MCF 10A (cell line): ENCODE measurements at regions of chr21 and their contacts with region 1.

Region 1: DNA sequence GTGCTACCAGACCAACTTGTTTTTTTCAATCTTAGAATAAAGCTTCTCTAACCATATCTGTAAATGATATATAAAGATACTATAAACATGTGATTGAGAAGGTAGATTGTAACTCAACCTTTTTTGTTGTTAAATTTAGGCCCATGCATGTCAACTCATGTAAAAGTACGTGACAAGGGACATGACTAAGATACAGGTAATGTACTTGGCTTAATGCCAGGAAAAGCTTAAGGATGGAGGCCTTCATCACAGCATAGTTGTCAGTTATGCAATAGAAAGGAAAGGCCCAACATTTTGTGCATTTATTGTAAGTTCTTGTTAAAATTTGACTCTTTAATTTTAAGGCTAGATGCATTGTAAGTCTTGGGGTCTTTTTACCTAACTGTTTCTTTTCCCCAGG is 305.1 kb downstream of the LTN1 start:
- DNase-seq: peak; percentile 57
- H3K4me3 Mint-ChIP-seq: no peak overlapping the region
- H3K27ac Mint-ChIP-seq: no peak overlapping the region
- H3K4me1 Mint-ChIP-seq: peaks cover under 1% of the 10 kb centered on the region
- H3K27me3 Mint-ChIP-seq: no peaks in the 10 kb centered on the region
- CTCF ChIP-seq: no peak

Region 2: DNA sequence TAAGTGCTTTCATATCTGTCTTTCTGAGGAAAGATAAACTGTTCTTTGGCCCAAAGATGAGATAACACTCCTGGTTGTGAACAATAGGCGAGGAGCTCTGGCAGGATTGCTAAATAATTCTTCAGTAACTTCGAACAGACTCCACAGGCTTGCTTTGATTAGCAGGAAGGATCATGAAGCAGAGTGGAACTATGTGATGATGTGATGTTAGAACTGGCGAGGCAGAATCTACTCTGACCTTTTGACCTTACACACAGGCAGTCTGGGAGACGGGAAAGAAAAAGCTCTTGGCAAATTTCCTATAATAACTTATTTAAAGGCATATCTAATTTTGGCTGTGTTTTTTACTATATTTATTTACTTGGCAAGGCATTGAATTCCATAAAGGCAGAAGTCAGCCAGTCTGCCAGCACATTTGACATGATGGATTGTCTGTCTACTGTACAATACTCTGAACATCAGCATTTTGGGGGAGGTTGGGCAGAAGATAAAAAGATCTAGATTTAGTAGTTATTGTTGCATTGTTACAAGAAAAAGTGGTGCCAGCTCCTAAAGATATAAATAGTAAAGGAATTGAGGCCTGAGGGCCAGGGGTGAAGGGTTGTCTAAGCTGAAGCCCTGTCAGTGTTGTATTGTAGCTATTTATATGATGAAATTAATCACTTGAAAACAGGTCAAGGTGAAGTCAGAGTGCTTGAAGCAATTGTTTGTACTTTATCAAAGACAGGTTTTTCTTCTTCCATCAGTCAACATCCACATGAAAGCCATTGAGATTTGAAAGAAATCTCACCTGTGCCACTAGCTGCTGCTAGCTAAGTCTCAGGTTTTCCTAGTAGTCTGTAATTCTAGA is 403.7 kb before region 1 on chr21:
- CTCF ChIA-PET with region 1: no interaction called
- POLR2A ChIA-PET with region 1: no interaction called
- intact Hi-C with region 1: no loop called
- DNase-seq: peak; percentile 30
- H3K4me3 Mint-ChIP-seq: no peak overlapping the region
- H3K27ac Mint-ChIP-seq: peak overlapping the region; percentile 46
- H3K4me1 Mint-ChIP-seq: peaks cover 7% of the 10 kb centered on the region
- H3K27me3 Mint-ChIP-seq: no peaks in the 10 kb centered on the region
- CTCF ChIP-seq: no peak

Region 3: GRCh38 chr21:28633839-28634555 is 53.6 kb before region 1 on chr21:
- CTCF ChIA-PET with region 1: no interaction called
- POLR2A ChIA-PET with region 1: interaction called, 17 read pairs
- intact Hi-C with region 1: loop called (anchors 10 kb)
- DNase-seq: peak; percentile 68
- H3K4me3 Mint-ChIP-seq: no peak overlapping the region
- H3K27ac Mint-ChIP-seq: peak overlapping the region; percentile 84
- H3K4me1 Mint-ChIP-seq: peaks cover 44% of the 10 kb centered on the region
- H3K27me3 Mint-ChIP-seq: no peaks in the 10 kb centered on the region
- CTCF ChIP-seq: no peak

Region 4: DNA sequence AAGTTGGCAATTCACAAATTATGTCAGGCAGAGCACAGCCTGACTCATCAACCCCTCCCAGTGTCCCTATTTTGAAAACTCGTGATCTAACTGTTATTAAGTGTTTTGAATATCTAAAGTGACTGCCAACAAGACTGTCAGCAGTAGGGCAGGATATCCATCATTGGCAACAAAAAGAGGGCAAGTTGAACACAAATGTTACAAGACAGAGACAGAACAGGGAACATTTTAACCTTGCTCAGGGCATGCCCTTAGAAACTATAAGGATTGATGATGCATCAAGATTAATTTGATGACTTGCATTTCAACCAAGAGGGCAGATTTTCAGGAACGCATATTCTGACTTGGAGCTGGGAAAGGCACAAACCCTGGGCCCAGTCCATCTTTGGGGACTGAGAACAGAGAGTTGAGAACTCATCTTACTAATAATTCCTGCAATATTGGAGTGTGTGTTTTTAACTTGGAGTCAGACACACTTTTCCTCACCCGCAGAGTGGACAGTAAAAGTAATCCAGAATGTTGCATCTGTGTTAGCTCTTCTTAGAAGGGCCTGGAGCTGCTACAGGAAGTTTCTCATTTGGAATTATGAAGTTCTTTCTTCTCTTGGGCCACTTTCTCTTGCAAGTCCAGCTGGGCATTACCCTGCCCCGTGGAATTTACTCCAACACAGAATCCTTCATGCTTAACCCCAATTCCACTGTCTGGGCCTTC is 12.1 kb before region 1 on chr21:
- CTCF ChIA-PET with region 1: interaction called, 4 read pairs
- POLR2A ChIA-PET with region 1: interaction called, 27 read pairs
- intact Hi-C with region 1: no loop called
- DNase-seq: peak; percentile 21
- H3K4me3 Mint-ChIP-seq: no peak overlapping the region
- H3K27ac Mint-ChIP-seq: peak overlapping the region; percentile 86
- H3K4me1 Mint-ChIP-seq: peaks cover 10% of the 10 kb centered on the region
- H3K27me3 Mint-ChIP-seq: no peaks in the 10 kb centered on the region
- CTCF ChIP-seq: no peak

Region 5: DNA sequence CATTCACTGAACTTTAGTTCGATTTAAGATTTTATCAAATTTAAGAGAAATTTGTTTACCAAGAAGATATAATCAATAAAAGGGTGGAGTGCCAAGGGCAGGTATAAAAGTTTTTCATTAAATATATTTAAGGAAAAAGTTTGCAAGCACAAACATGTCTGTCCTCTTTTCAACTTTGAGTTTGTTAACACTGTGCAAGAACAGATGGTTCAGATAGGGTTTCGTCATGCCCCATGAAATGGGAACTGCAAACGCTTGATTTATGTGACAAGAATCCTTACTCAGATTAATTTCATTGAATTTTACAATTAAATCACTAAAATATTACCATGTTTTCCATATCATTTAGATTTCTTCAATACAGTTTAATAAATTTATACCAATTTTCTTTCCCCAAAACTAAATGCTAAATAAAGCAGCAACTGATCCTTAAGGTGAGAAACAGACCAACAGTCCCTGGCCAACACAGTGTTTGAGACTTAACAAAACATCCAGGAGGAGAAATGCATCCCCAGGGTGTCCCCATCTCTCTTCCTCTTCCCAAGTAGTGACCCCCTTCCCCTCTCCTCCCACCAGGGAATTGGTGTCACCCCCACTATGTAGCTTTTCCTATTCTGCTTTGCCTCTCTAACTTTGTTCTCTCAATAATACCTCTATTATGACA is 12.2 kb after region 1 on chr21:
- CTCF ChIA-PET with region 1: interaction called, 7 read pairs
- POLR2A ChIA-PET with region 1: interaction called, 18 read pairs
- intact Hi-C with region 1: no loop called
- DNase-seq: peak; percentile 47
- H3K4me3 Mint-ChIP-seq: no peak overlapping the region
- H3K27ac Mint-ChIP-seq: peak overlapping the region; percentile 87
- H3K4me1 Mint-ChIP-seq: peaks cover 26% of the 10 kb centered on the region
- H3K27me3 Mint-ChIP-seq: no peaks in the 10 kb centered on the region
- CTCF ChIP-seq: no peak